ENCODE measurements at regions of chr1 and their contacts with region 1.

Region 1: GRCh38 chr1:43582162-43582589 is 51.5 kb downstream of the PTPRF start:
- DNase-seq: peak; percentile 96
- ATAC-seq: peak; percentile 100
- H3K4me3 ChIP-seq: no peak overlapping the region
- H3K27ac ChIP-seq: peak overlapping the region; percentile 73
- H3K4me1 ChIP-seq: peaks cover 14% of the 10 kb centered on the region
- H3K27me3 ChIP-seq: no peaks in the 10 kb centered on the region
- CTCF ChIP-seq: no peak

Region 2: GRCh38 chr1:43557744-43558245 is 24.4 kb before region 1 on chr1:
- CTCF ChIA-PET with region 1: interaction called, 6 read pairs
- POLR2A ChIA-PET with region 1: no interaction called
- intact Hi-C with region 1: loop called (anchors 2 kb)
- DNase-seq: peak; percentile 62
- ATAC-seq: peak; percentile 90
- H3K4me3 ChIP-seq: no peak overlapping the region
- H3K27ac ChIP-seq: 0 out of 2 replicates have a peak overlapping the region, but pooled peaks have one; percentile 16
- H3K4me1 ChIP-seq: peaks cover 14% of the 10 kb centered on the region
- H3K27me3 ChIP-seq: no peaks in the 10 kb centered on the region
- CTCF ChIP-seq: no peak

Region 3: GRCh38 chr1:43634721-43635120 is 52.5 kb after region 1 on chr1:
- CTCF ChIA-PET with region 1: no interaction called
- POLR2A ChIA-PET with region 1: no interaction called
- intact Hi-C with region 1: no loop called
- DNase-seq: peak; percentile 42
- ATAC-seq: peak; percentile 39; the same call in 1 of the 2 replicates
- H3K4me3 ChIP-seq: no peak overlapping the region
- H3K27ac ChIP-seq: no peak overlapping the region
- H3K4me1 ChIP-seq: peaks cover 8% of the 10 kb centered on the region
- H3K27me3 ChIP-seq: no peaks in the 10 kb centered on the region
- CTCF ChIP-seq: no peak